ENCODE measurements at regions of chr15 and their contacts with region 1.

Region 1: DNA sequence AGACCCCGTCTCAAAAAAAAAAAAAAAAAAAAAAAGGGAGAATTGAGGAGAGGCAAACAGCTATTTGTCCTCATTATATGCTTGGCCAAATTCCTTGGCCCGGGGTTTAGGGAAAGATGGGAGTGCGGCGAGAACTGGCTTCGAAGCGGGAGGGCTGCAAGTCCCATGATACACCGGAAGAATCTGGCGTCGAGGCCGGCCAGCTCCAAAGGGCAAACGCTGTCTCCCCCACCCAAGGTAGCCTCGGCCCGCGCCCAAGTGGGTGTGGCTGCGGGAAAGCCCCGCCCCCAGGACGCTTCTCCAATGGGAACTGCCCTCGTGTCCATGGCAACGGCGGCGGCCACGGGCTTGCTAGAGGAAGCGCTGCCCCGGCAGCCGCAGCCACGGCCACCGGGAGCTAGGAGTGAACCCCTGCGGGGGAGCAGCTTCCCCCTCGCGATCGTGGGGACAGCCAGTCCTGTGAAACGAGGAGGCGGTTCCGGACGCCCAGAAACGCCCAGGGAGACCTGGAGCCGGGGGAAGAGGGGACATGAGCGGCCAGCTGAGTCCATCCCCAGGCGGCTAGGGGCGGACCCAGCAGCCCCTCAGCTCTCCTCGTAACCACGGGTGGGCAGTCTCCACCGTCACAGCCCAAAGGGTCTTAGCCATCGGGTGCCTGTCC is at the start of gene TTLL13:
- DNase-seq: peak; percentile 87
- H3K4me3 ChIP-seq: peak within 1 kb of the TSS; percentile 49 to 75 (median 68)
- H3K27ac ChIP-seq: peak within 1 kb of the TSS; percentile 58
- H3K4me1 ChIP-seq: peaks cover 5% of the 10 kb centered on the region
- H3K27me3 ChIP-seq: no peaks in the 10 kb centered on the region
- CTCF ChIP-seq: peak in 1 of 2 donors; percentile 6
- POLR2A ChIP-seq: peak; percentile 73
- total RNA-seq, gene TTLL13: not detected in 2 replicates

Region 2: DNA sequence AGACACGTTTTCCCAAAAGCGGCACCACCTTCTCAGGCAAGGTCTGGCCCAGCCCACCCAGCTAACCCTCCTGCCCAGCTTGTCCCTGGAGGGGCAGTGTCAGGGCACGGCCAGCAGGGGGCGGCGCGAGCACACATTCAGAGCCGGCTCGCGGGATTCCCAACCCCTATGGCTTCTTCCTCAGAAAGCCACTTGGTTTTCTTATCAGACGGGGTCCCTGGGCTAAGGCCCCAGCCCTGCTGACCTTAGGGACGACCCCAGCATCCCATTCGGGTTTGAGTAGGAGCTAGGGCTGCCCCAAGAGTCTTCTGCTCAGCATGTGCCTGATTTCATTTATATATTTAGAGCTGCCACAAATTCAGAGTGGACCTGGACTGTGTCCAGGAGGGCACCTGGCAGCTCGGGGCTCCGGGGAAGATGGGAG is 1042.4 kb before region 1 on chr15:
- CTCF ChIA-PET with region 1: no interaction called
- POLR2A ChIA-PET with region 1: no interaction called
- dilution Hi-C with region 1: no loop called
- intact Hi-C with region 1: no loop called
- DNase-seq: peak; percentile 73
- H3K4me3 ChIP-seq: no peak overlapping the region
- H3K27ac ChIP-seq: no peak overlapping the region
- H3K4me1 ChIP-seq: peaks cover 2% of the 10 kb centered on the region
- H3K27me3 ChIP-seq: no peaks in the 10 kb centered on the region
- CTCF ChIP-seq: peak; percentile 96 to 100
- POLR2A ChIP-seq: no peak

Region 3: GRCh38 chr15:90265271-90266060 is 16.1 kb after region 1 on chr15 and contains the start of gene NGRN:
- CTCF ChIA-PET with region 1: interaction called, 20 read pairs
- POLR2A ChIA-PET with region 1: interaction called, 6 read pairs
- dilution Hi-C with region 1: no loop called
- intact Hi-C with region 1: loop called (anchors 1 kb)
- DNase-seq: peak; percentile 96
- H3K4me3 ChIP-seq: peak within 1 kb of the TSS; percentile 82 to 95 (median 85)
- H3K27ac ChIP-seq: peak within 1 kb of the TSS; percentile 76
- H3K4me1 ChIP-seq: peaks cover 55% of the 10 kb centered on the region
- H3K27me3 ChIP-seq: no peaks in the 10 kb centered on the region
- CTCF ChIP-seq: no peak
- POLR2A ChIP-seq: peak; percentile 96
- total RNA-seq, gene NGRN: 56.5 and 60.7 TPM in 2 replicates